PC-3 (cell line): ENCODE measurements at regions of chr9 and their contacts with region 1.

Region 1: DNA sequence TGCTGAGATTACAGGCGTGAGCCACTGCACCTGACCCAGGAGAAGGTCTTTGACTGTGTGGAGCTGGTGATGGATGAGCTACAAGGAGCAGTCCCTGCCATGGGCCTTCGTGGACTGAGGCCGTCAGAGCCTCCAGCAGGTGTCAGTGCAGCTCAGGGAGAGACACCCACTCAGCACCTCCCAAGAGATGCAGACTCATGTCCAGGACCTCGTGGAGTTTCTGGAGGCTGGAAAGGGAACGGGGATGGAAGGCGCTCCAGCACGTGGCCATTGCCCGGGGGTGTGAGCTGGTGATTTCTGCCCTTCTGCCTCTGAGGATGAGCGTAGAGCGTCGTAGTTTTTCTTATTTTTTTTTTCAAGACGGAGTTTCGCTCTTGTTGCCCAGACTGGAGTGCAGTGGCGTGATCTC is 9.5 kb downstream of the TOR4A start:
- DNase-seq: peak; percentile 72
- ATAC-seq: peak; percentile 100
- H3K4me3 ChIP-seq: no peak overlapping the region
- H3K27ac ChIP-seq: no peak overlapping the region
- H3K4me1 ChIP-seq: no peaks in the 10 kb centered on the region
- H3K27me3 ChIP-seq: no peaks in the 10 kb centered on the region
- CTCF ChIP-seq: peak; percentile 70

Region 2: GRCh38 chr9:137445275-137445807 is 158.4 kb after region 1 on chr9:
- CTCF ChIA-PET with region 1: interaction called, 4 read pairs
- POLR2A ChIA-PET with region 1: no interaction called
- intact Hi-C with region 1: loop called (anchors 5 kb)
- DNase-seq: peak; percentile 83
- ATAC-seq: peak; percentile 69
- H3K4me3 ChIP-seq: peak overlapping the region; percentile 47; the same call in 1 of the 2 replicates
- H3K27ac ChIP-seq: no peak overlapping the region
- H3K4me1 ChIP-seq: peaks cover 7% of the 10 kb centered on the region; the same call in 1 of the 2 replicates
- H3K27me3 ChIP-seq: no peaks in the 10 kb centered on the region
- CTCF ChIP-seq: peak; percentile 75

Region 3: GRCh38 chr9:137705443-137706293 is 418.7 kb after region 1 on chr9:
- CTCF ChIA-PET with region 1: no interaction called
- POLR2A ChIA-PET with region 1: no interaction called
- intact Hi-C with region 1: no loop called
- DNase-seq: no peak
- ATAC-seq: no peak
- H3K4me3 ChIP-seq: no peak overlapping the region
- H3K27ac ChIP-seq: no peak overlapping the region
- H3K4me1 ChIP-seq: no peaks in the 10 kb centered on the region
- H3K27me3 ChIP-seq: no peaks in the 10 kb centered on the region
- CTCF ChIP-seq: no peak